ENCODE measurements at regions of chr9 and their contacts with region 1.

Region 1: DNA sequence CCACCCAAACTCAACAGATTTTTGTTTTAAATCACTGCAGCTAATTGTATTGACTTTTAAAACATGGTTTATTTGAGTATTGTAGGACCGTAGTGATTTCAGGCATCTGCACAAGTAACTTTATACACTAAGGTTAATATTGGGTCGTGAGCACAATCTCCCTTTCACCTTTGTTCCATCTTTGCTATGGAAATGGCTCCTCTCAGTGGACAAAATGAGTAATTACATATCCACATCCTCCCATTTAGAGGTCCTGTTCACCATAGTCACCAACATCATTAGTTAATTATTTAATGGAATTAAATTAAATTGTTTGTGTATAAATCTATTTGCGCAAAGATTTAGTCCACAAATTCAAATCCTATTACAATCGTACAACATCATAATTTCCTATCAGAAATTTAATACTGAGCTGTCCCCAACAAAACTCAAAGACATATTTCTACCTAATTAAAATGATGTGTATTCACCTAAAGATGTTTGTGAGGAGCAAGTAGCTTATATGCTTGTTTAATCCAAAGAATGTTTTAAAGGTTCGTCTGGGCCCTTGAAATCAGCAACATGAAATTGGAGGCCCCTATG is 173.0 kb upstream of the DAPK1 start:
- DNase-seq: peak in 1 of 2 donors; percentile 18
- ATAC-seq: peak in 7 of 8 donors; percentile 56 to 85 (median 71)
- H3K4me3 ChIP-seq: no peak overlapping the region
- H3K27ac ChIP-seq: no peak overlapping the region
- H3K4me1 ChIP-seq: no peaks in the 10 kb centered on the region
- H3K27me3 ChIP-seq: peaks cover 0 to 4% (median 0%) of the 10 kb centered on the region in 7 donors
- CTCF ChIP-seq: peak; percentile 60 to 86 (median 82)

Region 2: DNA sequence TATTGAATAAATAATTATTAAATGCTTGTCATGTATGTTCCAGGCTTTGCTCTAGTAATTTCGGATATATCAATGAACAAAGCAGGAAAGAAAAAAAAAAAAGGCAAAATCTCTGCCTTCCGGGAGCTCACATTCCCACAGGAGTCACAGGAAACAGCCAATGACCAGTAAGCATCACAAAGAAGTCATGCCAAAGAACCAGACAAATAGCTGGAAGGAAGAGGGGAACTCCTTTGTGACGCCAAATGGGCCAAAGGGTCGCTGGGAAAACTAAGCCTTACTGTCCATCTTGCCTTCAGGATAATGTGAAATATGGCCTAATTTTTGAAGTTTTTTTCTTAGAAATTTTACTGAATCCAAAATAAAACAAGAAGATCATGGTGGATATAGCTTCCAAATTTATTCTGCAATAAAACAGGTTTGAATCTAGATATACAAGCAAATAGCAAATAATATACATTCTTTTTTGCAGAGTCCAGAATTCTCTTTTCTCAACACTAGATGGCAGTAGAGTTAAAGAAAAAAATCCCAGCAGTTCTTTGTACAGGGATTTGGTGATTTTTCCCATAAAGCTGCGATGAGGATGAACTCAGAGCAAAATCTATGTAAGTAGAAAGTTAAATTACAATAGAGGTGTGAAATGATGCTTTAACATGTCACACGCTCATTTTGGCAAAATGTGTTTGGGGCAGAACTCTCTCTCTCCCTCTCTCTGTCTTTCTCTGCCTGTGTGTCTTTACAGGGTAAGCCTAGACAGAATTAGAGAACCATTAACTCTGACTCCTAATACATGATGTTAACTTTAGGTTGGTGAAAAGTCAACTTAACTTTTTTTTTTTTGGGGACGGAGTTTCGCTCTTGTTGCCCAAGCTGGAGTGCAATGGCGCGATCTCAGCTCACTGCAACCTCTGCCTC is 910.5 kb before region 1 on chr9:
- intact Hi-C with region 1: loop called in 5 of 10 experiments (anchors 5 kb)
- DNase-seq: no peak
- ATAC-seq: peak in 2 of 8 donors; percentile 49 to 67
- H3K4me3 ChIP-seq: no peak overlapping the region
- H3K27ac ChIP-seq: no peak overlapping the region
- H3K4me1 ChIP-seq: peaks cover 0 to 10% (median 0%) of the 10 kb centered on the region in 9 donors
- H3K27me3 ChIP-seq: peaks cover 0 to 12% (median under 1%) of the 10 kb centered on the region in 7 donors
- CTCF ChIP-seq: peak; percentile 56 to 84 (median 74)

Region 3: GRCh38 chr9:86486891-86487837 is 837.5 kb before region 1 on chr9:
- intact Hi-C with region 1: loop called (anchors 1 to 5 kb)
- DNase-seq: no peak
- ATAC-seq: peak in 7 of 8 donors; percentile 55 to 80 (median 73)
- H3K4me3 ChIP-seq: no peak overlapping the region
- H3K27ac ChIP-seq: no peak overlapping the region
- H3K4me1 ChIP-seq: peaks cover 0 to 6% (median 0%) of the 10 kb centered on the region in 9 donors
- H3K27me3 ChIP-seq: peaks cover 0 to 4% (median 0%) of the 10 kb centered on the region in 7 donors
- CTCF ChIP-seq: peak; percentile 44 to 79 (median 69)

Region 4: DNA sequence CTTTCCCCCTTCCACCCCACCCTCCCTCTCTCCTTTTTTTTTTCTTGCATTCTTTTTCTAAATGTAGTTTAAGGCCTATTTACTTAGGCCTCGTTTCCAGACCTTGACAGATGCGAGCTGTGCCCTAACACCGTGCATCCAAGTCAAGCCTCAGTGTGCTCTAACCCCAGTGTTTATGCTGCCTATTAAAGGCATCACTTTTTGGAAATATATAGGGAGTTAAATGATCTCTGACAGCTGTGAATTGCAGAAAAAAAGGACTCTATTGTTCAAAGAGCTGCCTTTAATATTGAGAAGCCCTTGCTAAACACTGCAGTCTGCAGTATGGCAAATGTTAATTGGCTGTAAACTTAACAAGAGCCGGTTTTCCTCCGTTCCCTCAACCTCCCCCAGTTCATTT is 700.1 kb before region 1 on chr9:
- intact Hi-C with region 1: loop called in 2 of 10 experiments (anchors 5 to 10 kb)
- DNase-seq: no peak
- ATAC-seq: no peak
- H3K4me3 ChIP-seq: no peak overlapping the region
- H3K27ac ChIP-seq: peak overlapping the region in 1 of 10 donors; percentile 29
- H3K4me1 ChIP-seq: peaks cover 0 to 3% (median 0%) of the 10 kb centered on the region in 9 donors
- H3K27me3 ChIP-seq: no peaks in the 10 kb centered on the region
- CTCF ChIP-seq: no peak

Region 5: GRCh38 chr9:86749894-86750255 is 574.8 kb before region 1 on chr9:
- intact Hi-C with region 1: loop called in 1 of 10 experiments (anchors 10 kb)
- DNase-seq: peak in 1 of 2 donors; percentile 39
- ATAC-seq: peak in 5 of 8 donors; percentile 40 to 58 (median 52)
- H3K4me3 ChIP-seq: no peak overlapping the region
- H3K27ac ChIP-seq: no peak overlapping the region
- H3K4me1 ChIP-seq: peaks cover 0 to 12% (median 2%) of the 10 kb centered on the region in 9 donors
- H3K27me3 ChIP-seq: peaks cover 0 to 13% (median 0%) of the 10 kb centered on the region in 7 donors
- CTCF ChIP-seq: no peak

Region 6: GRCh38 chr9:86978922-86979474 is 345.7 kb before region 1 on chr9:
- intact Hi-C with region 1: loop called in 1 of 10 experiments (anchors 10 kb)
- DNase-seq: no peak
- ATAC-seq: peak in 4 of 8 donors; percentile 15 to 43 (median 38)
- H3K4me3 ChIP-seq: no peak overlapping the region
- H3K27ac ChIP-seq: peak overlapping the region in 6 of 10 donors; percentile 12 to 51 (median 34)
- H3K4me1 ChIP-seq: peaks cover 0 to 21% (median 3%) of the 10 kb centered on the region in 9 donors
- H3K27me3 ChIP-seq: no peaks in the 10 kb centered on the region
- CTCF ChIP-seq: no peak

Region 7: GRCh38 chr9:87445646-87446045 is 120.9 kb after region 1 on chr9:
- intact Hi-C with region 1: no loop called
- DNase-seq: peak in 1 of 2 donors; percentile 9
- ATAC-seq: peak in 6 of 8 donors; percentile 62 to 79 (median 72)
- H3K4me3 ChIP-seq: peak overlapping the region in 1 of 10 donors; percentile 18
- H3K27ac ChIP-seq: no peak overlapping the region
- H3K4me1 ChIP-seq: no peaks in the 10 kb centered on the region
- H3K27me3 ChIP-seq: no peaks in the 10 kb centered on the region
- CTCF ChIP-seq: no peak

Region 8: DNA sequence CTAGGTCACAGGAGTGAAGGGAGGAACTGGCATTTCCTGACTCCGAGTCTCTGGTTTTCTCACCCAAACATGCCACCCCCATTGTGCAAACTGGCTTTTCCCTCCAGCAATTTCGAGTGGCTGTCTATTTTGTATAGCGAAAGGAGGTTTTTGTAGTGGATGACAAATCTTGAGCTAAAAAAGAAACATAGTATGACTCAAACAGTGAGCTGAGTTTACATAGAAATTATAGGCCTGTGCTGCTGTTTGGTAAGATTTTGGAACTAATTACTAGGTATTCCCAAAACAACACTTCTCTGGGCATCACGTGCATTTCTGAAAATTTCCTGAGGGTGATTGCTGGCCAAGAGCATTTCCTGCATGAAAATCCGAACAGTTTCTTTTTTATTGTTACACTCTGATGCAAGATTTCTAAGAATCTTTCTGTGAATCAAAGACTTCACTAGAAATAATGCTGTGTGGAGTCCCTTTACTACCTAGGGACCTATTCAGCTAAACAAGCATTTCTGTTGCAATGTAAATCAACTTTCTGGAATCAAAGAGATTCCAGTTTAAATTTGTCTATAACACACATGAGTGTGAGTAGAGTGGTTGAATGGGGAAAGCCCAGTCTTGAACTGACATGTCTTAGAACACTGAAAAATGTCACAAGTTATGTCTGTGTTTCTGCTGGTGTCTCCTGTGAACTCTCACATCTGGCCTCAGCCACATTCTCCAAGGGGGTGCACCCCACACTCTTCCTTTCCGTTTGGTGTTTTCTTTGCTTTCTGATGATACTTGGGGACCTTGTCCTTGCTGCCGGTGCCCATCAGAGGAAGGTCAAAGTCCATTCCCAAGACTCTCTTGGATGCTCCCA is 139.6 kb after region 1 on chr9:
- intact Hi-C with region 1: no loop called
- DNase-seq: no peak
- ATAC-seq: no peak
- H3K4me3 ChIP-seq: no peak overlapping the region
- H3K27ac ChIP-seq: peak overlapping the region in 2 of 10 donors; percentile 15 to 58
- H3K4me1 ChIP-seq: peaks cover 0 to 11% (median 0%) of the 10 kb centered on the region in 9 donors
- H3K27me3 ChIP-seq: no peaks in the 10 kb centered on the region
- CTCF ChIP-seq: no peak

Region 9: GRCh38 chr9:87701931-87702421 is 377.3 kb after region 1 on chr9:
- intact Hi-C with region 1: no loop called
- DNase-seq: no peak
- ATAC-seq: no peak
- H3K4me3 ChIP-seq: no peak overlapping the region
- H3K27ac ChIP-seq: no peak overlapping the region
- H3K4me1 ChIP-seq: no peaks in the 10 kb centered on the region
- H3K27me3 ChIP-seq: no peaks in the 10 kb centered on the region
- CTCF ChIP-seq: no peak